CD4-positive, alpha-beta memory T cell (primary cell): ENCODE measurements at regions of chr6 and their contacts with region 1.

Region 1: GRCh38 chr6:13795041-13795750 is 19.2 kb downstream of the MCUR1 start:
- DNase-seq: peak; percentile 73 to 77 (median 75)
- H3K4me3 ChIP-seq: no peak overlapping the region
- H3K4me3 Mint-ChIP-seq: no peak overlapping the region
- H3K27ac ChIP-seq: no peak overlapping the region
- H3K27ac Mint-ChIP-seq: peak overlapping the region in 3 of 7 donors; percentile 7 to 32 (median 7)
- H3K4me1 ChIP-seq: no peaks in the 10 kb centered on the region
- H3K4me1 Mint-ChIP-seq: peaks cover 0 to 3% (median under 1%) of the 10 kb centered on the region in 4 donors
- H3K27me3 ChIP-seq: no peaks in the 10 kb centered on the region
- H3K27me3 Mint-ChIP-seq: no peaks in the 10 kb centered on the region

Region 2: GRCh38 chr6:13807696-13808095 is 12.5 kb after region 1 on chr6:
- CTCF ChIA-PET with region 1: interaction called, 38 read pairs
- POLR2A ChIA-PET with region 1: interaction called, 4 read pairs
- intact Hi-C with region 1: no loop called
- DNase-seq: no peak
- H3K4me3 ChIP-seq: no peak overlapping the region
- H3K4me3 Mint-ChIP-seq: no peak overlapping the region
- H3K27ac ChIP-seq: no peak overlapping the region
- H3K27ac Mint-ChIP-seq: peak overlapping the region in 1 of 7 donors; percentile 61
- H3K4me1 ChIP-seq: peaks cover 15% of the 10 kb centered on the region
- H3K4me1 Mint-ChIP-seq: peaks cover 16 to 28% (median 21%) of the 10 kb centered on the region in 4 donors
- H3K27me3 ChIP-seq: no peaks in the 10 kb centered on the region
- H3K27me3 Mint-ChIP-seq: no peaks in the 10 kb centered on the region

Region 3: DNA sequence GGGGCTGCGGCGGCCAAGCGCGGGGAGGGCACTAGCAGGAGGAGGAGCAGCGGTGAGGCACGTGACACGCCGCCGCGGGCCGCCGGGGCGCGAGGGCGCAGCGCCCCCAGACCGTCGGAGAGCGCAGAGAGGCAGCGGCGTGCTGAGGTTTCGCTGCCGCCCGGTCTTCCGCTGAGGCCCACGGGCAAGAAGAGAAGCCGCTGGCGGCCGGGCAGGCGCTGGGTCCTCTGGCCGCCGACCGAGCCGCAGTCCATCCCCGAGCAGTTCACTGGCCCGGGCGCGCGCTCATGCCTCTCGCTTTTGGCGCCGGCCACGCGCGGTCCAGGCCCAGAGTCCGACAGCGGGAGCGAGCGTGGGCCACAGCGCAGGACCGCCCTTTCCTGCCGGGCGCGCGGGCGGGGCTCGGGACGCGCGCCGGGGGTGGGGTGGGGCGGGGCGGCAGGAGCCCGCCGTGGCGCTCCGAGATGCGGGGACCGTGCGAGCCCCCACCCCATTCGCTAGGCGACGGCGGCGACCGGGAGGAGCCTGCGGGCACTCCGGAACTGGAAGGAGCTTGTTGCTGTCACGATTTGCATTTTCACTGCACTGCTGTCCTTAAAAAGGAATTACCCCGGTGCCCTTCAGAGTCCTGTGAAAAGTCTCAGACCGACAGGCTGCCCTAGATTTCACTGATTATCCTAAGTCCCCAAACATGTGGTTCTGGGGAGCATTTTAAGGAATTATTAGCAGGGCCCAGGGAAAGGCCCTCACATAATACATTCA is 19.2 kb after region 1 on chr6 and contains the start of gene MCUR1:
- CTCF ChIA-PET with region 1: interaction called, 38 read pairs
- POLR2A ChIA-PET with region 1: interaction called, 4 read pairs
- intact Hi-C with region 1: loop called (anchors 1 kb)
- DNase-seq: peak; percentile 77 to 83 (median 81)
- H3K4me3 ChIP-seq: peak within 1 kb of the TSS; percentile 34 to 78
- H3K4me3 Mint-ChIP-seq: peak within 1 kb of the TSS; percentile 88 to 93 (median 90)
- H3K27ac ChIP-seq: peak within 1 kb of the TSS; percentile 62
- H3K27ac Mint-ChIP-seq: peak within 1 kb of the TSS; percentile 82 to 92 (median 89)
- H3K4me1 ChIP-seq: peaks cover 28% of the 10 kb centered on the region
- H3K4me1 Mint-ChIP-seq: peaks cover 24 to 33% (median 31%) of the 10 kb centered on the region in 4 donors
- H3K27me3 ChIP-seq: no peaks in the 10 kb centered on the region
- H3K27me3 Mint-ChIP-seq: no peaks in the 10 kb centered on the region
- total RNA-seq, gene MCUR1: 11.3 to 11.5 TPM

Region 4: GRCh38 chr6:13873285-13874190 is 78.3 kb after region 1 on chr6:
- CTCF ChIA-PET with region 1: interaction called, 17 read pairs
- POLR2A ChIA-PET with region 1: no interaction called
- intact Hi-C with region 1: loop called (anchors 5 kb)
- DNase-seq: peak; percentile 52 to 64 (median 56)
- H3K4me3 ChIP-seq: peak overlapping the region; percentile 15 to 60
- H3K4me3 Mint-ChIP-seq: peak overlapping the region; percentile 75 to 93 (median 88)
- H3K27ac ChIP-seq: no peak overlapping the region
- H3K27ac Mint-ChIP-seq: peak overlapping the region in 5 of 7 donors; percentile 11 to 69 (median 65)
- H3K4me1 ChIP-seq: peaks cover 13% of the 10 kb centered on the region
- H3K4me1 Mint-ChIP-seq: peaks cover 8 to 18% (median 9%) of the 10 kb centered on the region in 4 donors
- H3K27me3 ChIP-seq: no peaks in the 10 kb centered on the region
- H3K27me3 Mint-ChIP-seq: peaks cover 4 to 9% of the 10 kb centered on the region in 2 donors

Region 5: DNA sequence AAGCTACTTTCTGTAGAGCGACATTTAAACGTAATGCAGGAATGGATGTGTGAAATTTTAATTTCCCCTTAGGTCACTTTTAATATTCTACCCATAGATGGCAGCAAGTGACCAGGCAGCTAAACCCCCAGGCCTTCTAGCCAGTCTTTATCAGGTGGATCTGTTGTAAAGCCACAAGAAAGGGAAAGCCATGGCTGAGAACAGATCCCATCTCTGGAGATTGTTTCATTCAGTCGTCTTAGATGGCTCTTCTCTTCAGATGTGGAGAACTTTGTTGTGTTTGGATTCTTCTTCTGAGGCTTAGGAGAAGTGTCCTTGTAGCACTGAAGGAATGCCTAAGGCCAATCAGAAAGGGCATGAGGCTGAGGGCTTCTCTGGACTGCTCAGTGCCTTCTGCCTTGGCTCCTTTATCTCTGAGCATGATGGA is 113.8 kb after region 1 on chr6:
- CTCF ChIA-PET with region 1: no interaction called
- POLR2A ChIA-PET with region 1: no interaction called
- intact Hi-C with region 1: loop called (anchors 10 kb)
- DNase-seq: peak; percentile 57 to 71 (median 67)
- H3K4me3 ChIP-seq: no peak overlapping the region
- H3K4me3 Mint-ChIP-seq: no peak overlapping the region
- H3K27ac ChIP-seq: no peak overlapping the region
- H3K27ac Mint-ChIP-seq: no peak overlapping the region
- H3K4me1 ChIP-seq: peaks cover 4% of the 10 kb centered on the region
- H3K4me1 Mint-ChIP-seq: peaks cover 0 to 6% (median 4%) of the 10 kb centered on the region in 4 donors
- H3K27me3 ChIP-seq: no peaks in the 10 kb centered on the region
- H3K27me3 Mint-ChIP-seq: peaks cover 18 to 21% of the 10 kb centered on the region in 2 donors

Region 6: GRCh38 chr6:14046476-14047068 is 251.4 kb after region 1 on chr6:
- CTCF ChIA-PET with region 1: interaction called, 29 read pairs
- POLR2A ChIA-PET with region 1: no interaction called
- intact Hi-C with region 1: loop called (anchors 1 kb)
- DNase-seq: peak; percentile 30 to 44 (median 37)
- H3K4me3 ChIP-seq: no peak overlapping the region
- H3K4me3 Mint-ChIP-seq: no peak overlapping the region
- H3K27ac ChIP-seq: no peak overlapping the region
- H3K27ac Mint-ChIP-seq: no peak overlapping the region
- H3K4me1 ChIP-seq: no peaks in the 10 kb centered on the region
- H3K4me1 Mint-ChIP-seq: peaks cover 0 to 1% (median 0%) of the 10 kb centered on the region in 4 donors
- H3K27me3 ChIP-seq: no peaks in the 10 kb centered on the region
- H3K27me3 Mint-ChIP-seq: peaks cover 19 to 26% of the 10 kb centered on the region in 2 donors